HepG2 (cell line): ENCODE measurements at regions of chr10 and their contacts with region 1.

Region 1: DNA sequence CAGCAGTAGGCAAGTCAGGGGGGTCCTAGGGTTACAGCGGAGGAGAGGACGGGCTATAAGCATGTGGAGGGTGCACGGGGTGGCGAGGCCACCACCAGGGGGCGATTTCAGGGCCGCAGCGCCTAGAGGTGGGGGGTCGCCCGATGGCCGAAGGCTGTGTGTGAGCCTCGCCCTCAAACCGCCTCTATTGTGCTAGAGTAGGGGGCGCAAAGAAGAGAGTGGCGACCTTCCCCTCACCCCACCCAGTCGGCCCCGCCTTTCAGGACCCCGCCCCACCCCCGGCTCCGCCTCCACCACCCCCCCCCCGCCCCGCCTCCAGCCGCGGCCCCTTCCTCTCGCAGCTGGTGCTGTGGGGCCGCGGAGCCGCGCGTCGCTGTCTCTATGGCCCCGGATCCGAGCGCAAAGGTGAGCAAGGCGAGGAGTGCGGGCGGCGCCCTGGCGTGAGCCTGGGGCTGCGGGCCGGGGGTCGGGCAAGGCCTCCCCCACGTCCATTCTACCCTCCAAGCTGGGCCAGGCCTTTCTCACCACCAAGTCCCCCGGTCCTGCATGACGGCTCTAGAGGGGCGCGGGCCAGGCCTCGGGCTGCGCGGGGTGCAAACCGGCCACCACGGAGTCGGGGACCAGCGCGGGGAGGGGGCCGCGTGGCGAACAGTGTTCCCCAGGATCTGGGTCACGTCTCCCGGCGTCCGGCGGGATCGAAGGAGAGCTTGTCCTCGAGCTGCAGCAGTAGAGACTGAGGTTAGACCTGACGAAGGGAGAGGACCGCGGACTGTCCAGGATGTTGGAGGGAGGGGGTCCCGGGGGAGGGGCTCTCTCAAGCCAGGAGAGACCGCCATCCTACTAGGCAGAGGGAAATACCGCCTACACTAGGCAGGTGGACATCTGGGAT is at the start of gene SEMA4G:
- DNase-seq: peak; percentile 80
- ATAC-seq: peak; percentile 69
- H3K4me3 ChIP-seq: peak within 1 kb of the TSS; percentile 84 to 96 (median 94)
- H3K27ac ChIP-seq: peak within 1 kb of the TSS; percentile 96
- H3K4me1 ChIP-seq: peaks cover 88% of the 10 kb centered on the region
- H3K27me3 ChIP-seq: no peaks in the 10 kb centered on the region; a peak in 1 of 5 replicates
- CTCF ChIP-seq: peak; percentile 87
- EP300 ChIP-seq: 0 out of 4 replicates have a peak, but pooled peaks of 1 of the 2 experiments have one; percentile 23
- POLR2A ChIP-seq: peak; percentile 52 to 61; a peak in 3 of 4 replicates
- RAD21 ChIP-seq: peak; percentile 70
- total RNA-seq, gene SEMA4G: 42.9 and 46.2 TPM in 2 replicates

Region 2: GRCh38 chr10:100986952-100987750 is 17.7 kb after region 1 on chr10 and contains the starts of genes MRPL43 and TWNK:
- CTCF ChIA-PET with region 1: interaction called, 5 read pairs
- POLR2A ChIA-PET with region 1: interaction called, 277 read pairs
- in situ Hi-C with region 1: no loop called
- intact Hi-C with region 1: loop called (anchors 1 kb)
- DNase-seq: peak; percentile 72
- ATAC-seq: peak; percentile 73
- H3K4me3 ChIP-seq: peak within 1 kb of the TSS; percentile 77 to 96 (median 91)
- H3K27ac ChIP-seq: peak within 1 kb of the TSS; percentile 83
- H3K4me1 ChIP-seq: peaks cover 53% of the 10 kb centered on the region
- H3K27me3 ChIP-seq: no peaks in the 10 kb centered on the region; a peak in 1 of 5 replicates
- CTCF ChIP-seq: peak; percentile 15; the same call in 1 of the 2 replicates
- EP300 ChIP-seq: no peak
- POLR2A ChIP-seq: peak; percentile 55 to 67; a peak in 3 of 4 replicates
- RAD21 ChIP-seq: no peak
- total RNA-seq, gene MRPL43: 68.8 and 71.0 TPM in 2 replicates
- total RNA-seq, gene TWNK: 16.5 and 21.9 TPM in 2 replicates

Region 3: DNA sequence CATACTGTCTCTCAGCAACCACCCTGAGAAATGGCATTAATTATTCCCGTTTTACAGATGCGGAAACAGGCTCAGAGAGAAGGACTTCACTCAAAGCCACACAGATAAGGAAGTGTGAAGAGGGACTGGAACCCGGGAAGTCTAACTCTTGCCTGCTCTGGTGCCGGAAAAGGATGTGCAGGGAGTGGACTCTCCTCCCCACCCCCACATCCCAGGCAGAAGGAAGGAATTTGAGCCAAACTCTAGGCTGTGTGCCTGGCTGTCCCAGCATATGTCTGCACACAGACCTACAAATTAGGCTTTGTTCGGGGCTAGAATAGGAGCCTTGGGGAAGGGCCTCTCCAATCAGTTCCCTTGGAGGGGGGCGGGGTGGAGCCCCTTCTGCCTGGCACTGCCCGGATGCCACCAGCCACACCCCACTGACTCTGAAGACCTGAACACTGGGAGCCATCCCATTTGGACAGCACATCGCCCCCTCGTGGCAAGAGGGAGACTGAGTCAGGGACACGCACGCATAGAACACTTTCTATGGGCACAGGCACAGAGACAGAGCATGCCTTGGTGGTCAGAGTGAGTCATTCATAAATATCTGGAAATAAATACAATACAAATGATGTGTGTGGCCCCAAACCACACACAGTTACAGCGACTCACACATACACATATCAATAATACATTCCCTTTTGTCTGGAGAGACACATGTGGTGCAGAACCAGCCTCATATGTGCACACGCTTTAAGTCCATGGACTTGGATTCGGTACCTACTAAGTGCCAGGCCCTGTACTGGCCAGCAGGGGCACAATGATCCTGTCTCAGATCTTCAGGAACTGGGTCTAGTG is 43.3 kb after region 1 on chr10:
- CTCF ChIA-PET with region 1: interaction called, 8 read pairs
- POLR2A ChIA-PET with region 1: interaction called, 7 read pairs
- in situ Hi-C with region 1: no loop called
- intact Hi-C with region 1: loop called (anchors 2 kb)
- DNase-seq: peak; percentile 89
- ATAC-seq: peak; percentile 73
- H3K4me3 ChIP-seq: peak overlapping the region in 1 of 3 experiments; percentile 77; a peak in 2 of 6 replicates
- H3K27ac ChIP-seq: no peak overlapping the region
- H3K4me1 ChIP-seq: peaks cover 75% of the 10 kb centered on the region
- H3K27me3 ChIP-seq: no peaks in the 10 kb centered on the region
- CTCF ChIP-seq: peak; percentile 93
- EP300 ChIP-seq: no peak; a peak in 1 of 4 replicates
- POLR2A ChIP-seq: no peak
- RAD21 ChIP-seq: peak; percentile 77